Right ventricle myocardium inferior (tissue), 1 donor: ENCODE measurements at regions of chr12 and their contacts with region 1.

Region 1: GRCh38 chr12:48995061-48995879 is 3.9 kb downstream of the DDN start:
- DNase-seq: peak; percentile 90
- ATAC-seq: peak; percentile 83

Region 2: DNA sequence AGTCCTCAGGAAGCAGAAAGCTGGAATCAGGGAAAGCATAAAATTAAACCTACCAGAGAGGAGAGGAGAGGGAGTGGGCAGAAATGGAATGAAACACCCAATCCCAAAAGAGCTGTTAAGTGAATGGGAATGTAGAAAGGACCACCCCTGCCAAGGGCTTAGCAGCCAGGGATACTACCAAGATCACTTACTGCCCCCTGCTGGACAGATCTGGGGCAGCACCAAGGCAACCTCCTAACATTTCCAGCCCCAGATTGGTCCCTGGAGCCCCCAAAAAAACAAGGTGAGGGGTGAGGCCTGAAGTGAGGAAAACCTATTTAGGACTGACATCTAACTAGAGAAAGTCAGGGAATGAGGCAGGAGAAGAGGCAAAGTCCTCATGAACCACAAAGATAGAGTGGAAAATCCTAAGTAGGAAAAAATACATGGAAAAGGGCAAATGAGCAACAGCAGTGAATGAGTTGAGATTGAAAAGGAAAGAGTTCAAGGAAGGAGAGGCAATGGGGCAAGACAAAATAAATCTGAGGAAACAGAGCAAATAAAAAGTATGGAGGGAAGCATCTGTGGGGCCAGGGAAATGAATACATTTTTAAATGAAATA is 58.8 kb before region 1 on chr12:
- intact Hi-C with region 1: loop called (anchors 10 kb)
- DNase-seq: peak; percentile 71
- ATAC-seq: peak; percentile 67

Region 3: DNA sequence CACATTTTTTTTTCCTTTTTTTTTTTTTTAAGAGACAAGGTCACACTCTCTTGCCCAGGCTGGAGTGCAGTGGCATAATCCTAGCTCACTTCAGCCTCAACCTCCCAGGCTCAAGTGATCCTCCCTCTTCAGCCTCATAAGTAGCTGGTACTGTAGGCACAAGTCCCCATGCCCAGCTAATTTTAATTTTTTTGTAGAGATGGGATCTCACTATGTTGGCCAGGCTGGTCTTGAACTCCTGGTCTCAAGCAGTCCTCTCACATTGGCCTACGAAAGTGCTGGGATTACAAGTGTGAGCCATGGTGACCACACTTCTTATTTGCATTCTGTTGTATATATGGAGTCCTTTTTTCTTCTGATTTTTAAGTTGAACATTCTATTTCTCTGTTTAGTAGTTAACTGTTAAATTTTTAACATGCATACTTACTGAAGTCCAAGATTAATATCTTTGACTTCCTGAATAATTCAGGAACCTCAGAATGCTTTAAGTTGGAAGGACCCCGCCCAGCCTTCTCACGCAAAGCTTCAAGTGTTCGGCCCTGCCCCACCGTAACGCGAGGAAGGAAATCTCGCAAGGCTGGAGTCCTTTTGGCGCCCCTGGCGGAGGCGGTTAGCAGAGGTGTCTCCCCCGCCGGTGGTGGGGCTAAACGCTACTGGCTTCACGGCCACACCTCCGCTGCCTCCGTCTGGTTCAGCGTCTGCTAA is 393.6 kb after region 1 on chr12:
- intact Hi-C with region 1: no loop called
- DNase-seq: peak; percentile 82
- ATAC-seq: no peak